ENCODE measurements at regions of chr10 and their contacts with region 1.

Region 1: DNA sequence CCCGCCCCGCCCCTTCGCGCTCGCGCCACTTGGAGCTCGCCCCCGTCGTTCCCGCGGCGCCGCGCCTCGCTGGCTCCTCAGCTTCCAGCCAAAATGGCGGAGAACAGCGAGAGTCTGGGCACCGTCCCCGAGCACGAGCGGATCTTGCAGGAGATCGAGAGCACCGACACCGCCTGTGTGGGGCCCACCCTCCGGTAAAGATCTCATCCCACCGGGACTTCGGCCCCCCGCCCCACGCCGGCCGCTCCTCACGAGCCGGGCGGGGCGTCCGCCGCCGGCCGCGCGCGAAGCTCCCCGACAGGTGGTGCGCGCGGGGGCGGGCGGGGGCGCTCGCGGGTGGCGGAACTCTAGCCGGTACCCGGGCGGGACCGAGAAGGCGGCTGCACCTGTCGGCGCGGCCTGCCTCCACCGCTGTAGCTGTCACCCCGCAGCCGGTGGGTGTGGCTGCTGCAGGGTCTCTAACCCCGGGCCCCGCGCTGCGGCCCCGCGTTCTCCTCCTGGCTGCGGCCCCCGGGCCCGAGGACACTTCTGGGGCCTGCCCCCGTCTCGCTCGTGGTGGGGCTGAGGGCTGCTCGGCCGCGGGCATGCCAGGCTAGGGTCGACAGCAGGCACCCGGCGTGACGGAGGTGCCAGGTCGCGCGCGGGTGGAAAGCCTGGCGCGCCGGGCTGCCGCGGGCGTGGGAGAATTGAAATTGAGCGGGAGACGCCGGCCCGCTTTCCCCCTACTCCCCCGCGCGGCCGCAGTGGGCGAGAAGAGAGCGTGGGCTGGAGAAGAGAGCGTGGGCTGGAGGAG is at the start of gene EXOC6:
- DNase-seq: peak; percentile 92
- ATAC-seq: peak; percentile 78
- H3K4me3 Mint-ChIP-seq: peak within 1 kb of the TSS; percentile 79
- H3K27ac Mint-ChIP-seq: peak within 1 kb of the TSS; percentile 90
- H3K4me1 Mint-ChIP-seq: peaks cover 33% of the 10 kb centered on the region
- H3K27me3 Mint-ChIP-seq: no peaks in the 10 kb centered on the region
- total RNA-seq, gene EXOC6: 9.7 to 12.1 TPM

Region 2: DNA sequence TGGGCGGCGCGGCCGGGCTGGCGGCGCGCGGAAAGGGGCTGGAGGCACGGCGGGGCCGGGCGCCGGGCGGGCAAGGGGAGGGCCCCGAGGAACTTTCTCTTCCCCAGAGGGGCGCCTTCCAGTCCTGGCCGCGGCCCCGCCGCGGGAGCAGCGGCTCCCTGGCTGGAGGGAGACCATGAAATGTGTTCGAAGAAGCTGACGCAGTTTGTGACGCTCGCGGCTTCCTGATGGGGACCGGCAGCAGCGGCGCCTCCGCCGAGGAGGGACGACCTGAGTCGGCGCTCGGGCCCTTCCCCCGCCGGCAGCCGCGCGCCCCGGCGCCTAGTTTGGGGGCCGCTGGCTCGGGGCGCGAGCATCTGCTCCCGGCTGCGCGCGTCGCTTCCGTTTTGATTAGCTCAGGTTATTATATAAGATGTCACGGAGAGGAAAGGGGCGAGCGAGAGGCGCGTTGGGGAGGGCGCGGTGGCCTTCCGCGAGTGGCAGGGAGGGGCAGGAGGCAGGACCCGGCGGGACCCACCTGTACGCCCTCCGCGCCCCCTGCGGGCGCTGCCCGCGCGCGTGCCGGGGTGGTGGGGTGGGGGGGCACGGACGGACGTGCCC is 1685.3 kb before region 1 on chr10:
- CTCF ChIA-PET with region 1: no interaction called
- POLR2A ChIA-PET with region 1: no interaction called
- intact Hi-C with region 1: loop called in 1 of 2 experiments (anchors 10 kb)
- DNase-seq: peak; percentile 83
- ATAC-seq: peak; percentile 62
- H3K4me3 Mint-ChIP-seq: peak overlapping the region; percentile 81
- H3K27ac Mint-ChIP-seq: peak overlapping the region; percentile 91
- H3K4me1 Mint-ChIP-seq: peaks cover 34% of the 10 kb centered on the region
- H3K27me3 Mint-ChIP-seq: no peaks in the 10 kb centered on the region

Region 3: GRCh38 chr10:92290837-92291615 is 557.6 kb before region 1 on chr10 and contains the starts of genes CPEB3 and MARCHF5:
- CTCF ChIA-PET with region 1: no interaction called
- POLR2A ChIA-PET with region 1: no interaction called
- intact Hi-C with region 1: loop called in 1 of 2 experiments (anchors 1 kb)
- DNase-seq: peak; percentile 97
- ATAC-seq: peak; percentile 98
- H3K4me3 Mint-ChIP-seq: peak within 1 kb of the TSS; percentile 75
- H3K27ac Mint-ChIP-seq: peak within 1 kb of the TSS; percentile 80
- H3K4me1 Mint-ChIP-seq: peaks cover 21% of the 10 kb centered on the region
- H3K27me3 Mint-ChIP-seq: no peaks in the 10 kb centered on the region
- total RNA-seq, gene CPEB3: 1.4 to 1.8 TPM
- total RNA-seq, gene MARCHF5: 11.7 to 25.9 TPM

Region 4: GRCh38 chr10:92689663-92690210 is 158.9 kb before region 1 on chr10 and contains the start of gene HHEX:
- CTCF ChIA-PET with region 1: interaction called, 4 read pairs
- POLR2A ChIA-PET with region 1: interaction called, 5 read pairs
- intact Hi-C with region 1: loop called in 1 of 2 experiments (anchors 1 kb)
- DNase-seq: peak; percentile 52
- ATAC-seq: peak; percentile 54
- H3K4me3 Mint-ChIP-seq: peak within 1 kb of the TSS; percentile 51
- H3K27ac Mint-ChIP-seq: no peak within 1 kb of the TSS
- H3K4me1 Mint-ChIP-seq: peaks cover 20% of the 10 kb centered on the region
- H3K27me3 Mint-ChIP-seq: peaks cover 58% of the 10 kb centered on the region
- total RNA-seq, gene HHEX: 0.11 TPM in 1 of 2 experiments, not detected in the other

Region 5: DNA sequence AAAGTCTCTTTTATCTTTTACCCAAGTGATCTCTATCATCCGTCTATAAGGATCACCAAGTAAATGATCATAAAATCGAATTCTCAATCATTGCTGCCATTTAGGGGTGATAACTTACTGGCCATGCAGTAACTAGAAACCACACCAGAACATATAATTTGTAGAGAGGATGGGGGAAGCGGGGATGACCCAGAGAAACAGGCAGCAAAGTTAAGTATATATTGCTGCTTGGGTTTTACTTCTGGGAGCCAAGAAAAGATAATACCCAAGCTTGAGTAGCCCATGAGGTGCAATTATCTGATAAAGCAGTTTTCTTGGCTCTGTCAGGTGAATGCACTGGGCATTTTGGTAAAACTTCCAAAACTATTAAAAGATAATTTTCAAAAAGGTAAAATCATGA is 18.6 kb after region 1 on chr10:
- CTCF ChIA-PET with region 1: interaction called, 10 read pairs
- POLR2A ChIA-PET with region 1: no interaction called
- intact Hi-C with region 1: no loop called
- DNase-seq: no peak
- ATAC-seq: no peak
- H3K4me3 Mint-ChIP-seq: no peak overlapping the region
- H3K27ac Mint-ChIP-seq: no peak overlapping the region
- H3K4me1 Mint-ChIP-seq: peaks cover 8% of the 10 kb centered on the region
- H3K27me3 Mint-ChIP-seq: no peaks in the 10 kb centered on the region

Region 6: DNA sequence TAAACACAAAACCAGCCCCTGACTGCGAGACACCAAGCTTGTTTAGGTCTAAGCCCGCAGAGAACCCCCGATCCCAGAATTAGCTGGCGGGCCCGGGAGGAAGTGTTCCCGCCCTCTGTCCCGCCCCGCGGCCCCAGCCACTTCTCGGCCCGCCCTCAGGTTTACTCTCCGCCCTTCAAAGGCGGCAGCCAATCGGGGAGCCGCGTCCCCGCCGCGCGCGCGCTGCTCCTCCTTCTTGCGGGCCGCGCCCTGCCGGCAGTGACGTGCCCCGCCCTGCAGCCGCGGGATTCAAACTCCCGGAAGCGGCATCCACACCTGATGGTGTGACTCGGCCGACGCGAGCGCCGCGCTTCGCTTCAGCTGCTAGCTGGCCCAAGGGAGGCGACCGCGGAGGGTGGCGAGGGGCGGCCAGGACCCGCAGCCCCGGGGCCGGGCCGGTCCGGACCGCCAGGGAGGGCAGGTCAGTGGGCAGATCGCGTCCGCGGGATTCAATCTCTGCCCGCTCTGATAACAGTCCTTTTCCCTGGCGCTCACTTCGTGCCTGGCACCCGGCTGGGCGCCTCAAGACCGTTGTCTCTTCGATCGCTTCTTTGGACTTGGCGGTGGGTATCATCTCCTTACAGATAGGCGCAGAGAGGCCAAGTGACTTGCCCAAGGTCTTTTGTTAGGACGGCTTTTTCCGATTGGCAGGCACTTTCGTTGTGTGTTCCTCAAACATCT is 647.8 kb after region 1 on chr10 and contains the start of gene CEP55:
- CTCF ChIA-PET with region 1: no interaction called
- POLR2A ChIA-PET with region 1: no interaction called
- intact Hi-C with region 1: loop called (anchors 1 to 10 kb)
- DNase-seq: peak; percentile 98
- ATAC-seq: peak; percentile 99
- H3K4me3 Mint-ChIP-seq: peak within 1 kb of the TSS; percentile 78
- H3K27ac Mint-ChIP-seq: peak within 1 kb of the TSS; percentile 84
- H3K4me1 Mint-ChIP-seq: peaks cover 25% of the 10 kb centered on the region
- H3K27me3 Mint-ChIP-seq: peaks cover 2% of the 10 kb centered on the region
- total RNA-seq, gene CEP55: 67.8 to 76.0 TPM

Region 7: GRCh38 chr10:94362360-94363250 is 1514.0 kb after region 1 on chr10 and contains the start of gene NOC3L:
- CTCF ChIA-PET with region 1: no interaction called
- POLR2A ChIA-PET with region 1: no interaction called
- intact Hi-C with region 1: loop called in 1 of 2 experiments (anchors 5 kb)
- DNase-seq: peak; percentile 98
- ATAC-seq: peak; percentile 98
- H3K4me3 Mint-ChIP-seq: peak within 1 kb of the TSS; percentile 96
- H3K27ac Mint-ChIP-seq: peak within 1 kb of the TSS; percentile 93
- H3K4me1 Mint-ChIP-seq: peaks cover 27% of the 10 kb centered on the region
- H3K27me3 Mint-ChIP-seq: peaks cover 8% of the 10 kb centered on the region
- total RNA-seq, gene NOC3L: 50.7 to 53.7 TPM

Measured in activated CD4-positive, alpha-beta T cell treated with anti-CD3 and anti-CD28 coated beads for 36 hours (primary cell).